ENCODE measurements at regions of chr22 and their contacts with region 1.

Region 1: DNA sequence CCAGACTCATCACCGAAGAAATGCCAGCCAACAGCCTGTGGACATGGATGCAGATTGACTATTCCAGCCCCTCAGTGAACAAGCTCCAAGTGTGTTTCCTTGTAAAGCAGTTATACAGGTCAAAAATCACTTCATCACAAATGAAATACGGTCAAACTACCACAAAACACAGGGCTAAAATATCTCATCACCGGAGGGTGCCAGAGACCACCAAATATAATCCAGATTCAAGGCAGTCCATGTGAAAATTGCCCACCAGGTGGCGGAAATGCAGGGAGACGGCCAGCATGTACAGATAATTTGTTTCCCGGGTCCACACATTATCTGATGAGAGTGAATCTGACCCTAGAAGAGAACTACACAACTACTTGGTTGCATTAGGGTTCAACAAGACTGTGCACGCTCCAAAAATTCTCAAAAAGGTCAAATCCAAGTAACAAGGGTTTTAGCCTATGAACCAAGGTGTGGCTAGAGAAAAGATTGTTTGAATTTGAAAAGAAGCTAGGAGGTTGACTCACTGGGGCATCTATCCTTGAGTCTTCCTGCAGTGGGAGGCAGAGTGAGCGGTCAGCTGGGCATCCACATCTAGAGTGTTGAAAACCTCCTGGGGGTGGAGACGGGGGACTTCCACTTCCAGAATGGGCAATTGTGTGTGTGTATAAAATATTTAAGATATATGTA is 71.7 kb downstream of the IGLL5 start:
- DNase-seq: no peak
- ATAC-seq: peak; percentile 63
- H3K4me3 Mint-ChIP-seq: no peak overlapping the region
- H3K27ac Mint-ChIP-seq: no peak overlapping the region
- H3K4me1 Mint-ChIP-seq: peaks cover 15% of the 10 kb centered on the region
- H3K27me3 Mint-ChIP-seq: no peaks in the 10 kb centered on the region
- CTCF ChIP-seq: peak; percentile 94

Region 2: DNA sequence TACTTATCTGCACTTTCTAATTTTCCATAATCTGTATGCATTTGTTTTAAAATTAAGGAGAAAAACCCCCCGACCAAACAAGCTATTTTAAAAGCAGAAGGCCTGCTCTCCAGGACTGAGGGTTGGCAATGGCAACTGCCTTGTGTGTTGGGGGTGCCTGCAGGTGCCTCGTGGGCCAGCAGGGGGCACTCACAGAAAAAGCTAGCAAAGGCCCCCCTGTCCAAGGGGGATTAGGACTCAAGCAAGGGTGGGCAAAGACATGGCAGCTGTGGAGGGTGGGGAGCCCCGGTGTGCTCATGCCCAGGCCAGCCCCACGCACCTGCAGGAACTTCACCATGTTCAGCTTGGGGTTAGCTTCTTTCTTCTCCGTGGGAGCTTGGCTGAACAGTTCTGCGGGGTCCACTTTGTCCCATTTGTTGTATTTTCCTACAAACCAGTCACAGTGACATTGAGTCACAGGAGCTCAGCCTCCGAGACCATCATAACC is 987.0 kb before region 1 on chr22:
- CTCF ChIA-PET with region 1: interaction called, 7 read pairs
- POLR2A ChIA-PET with region 1: no interaction called
- intact Hi-C with region 1: loop called (anchors 10 kb)
- DNase-seq: peak; percentile 56
- ATAC-seq: peak; percentile 77
- H3K4me3 Mint-ChIP-seq: no peak overlapping the region
- H3K27ac Mint-ChIP-seq: no peak overlapping the region
- H3K4me1 Mint-ChIP-seq: peaks cover 2% of the 10 kb centered on the region
- H3K27me3 Mint-ChIP-seq: no peaks in the 10 kb centered on the region
- CTCF ChIP-seq: peak; percentile 79

Region 3: GRCh38 chr22:22357024-22357883 is 602.0 kb before region 1 on chr22:
- CTCF ChIA-PET with region 1: interaction called, 12 read pairs
- POLR2A ChIA-PET with region 1: interaction called, 3 read pairs
- intact Hi-C with region 1: loop called (anchors 1 kb)
- DNase-seq: peak; percentile 74
- ATAC-seq: peak; percentile 87
- H3K4me3 Mint-ChIP-seq: peak overlapping the region; percentile 65
- H3K27ac Mint-ChIP-seq: peak overlapping the region; percentile 79
- H3K4me1 Mint-ChIP-seq: peaks cover 55% of the 10 kb centered on the region
- H3K27me3 Mint-ChIP-seq: no peaks in the 10 kb centered on the region
- CTCF ChIP-seq: no peak

Region 4: GRCh38 chr22:22687638-22688500 is 271.4 kb before region 1 on chr22:
- CTCF ChIA-PET with region 1: interaction called, 25 read pairs
- POLR2A ChIA-PET with region 1: interaction called, 3 read pairs
- intact Hi-C with region 1: no loop called
- DNase-seq: no peak
- ATAC-seq: no peak
- H3K4me3 Mint-ChIP-seq: peak overlapping the region; percentile 30
- H3K27ac Mint-ChIP-seq: no peak overlapping the region
- H3K4me1 Mint-ChIP-seq: peaks cover 55% of the 10 kb centered on the region
- H3K27me3 Mint-ChIP-seq: no peaks in the 10 kb centered on the region
- CTCF ChIP-seq: peak; percentile 22

Region 5: GRCh38 chr22:22770280-22770871 is 188.9 kb before region 1 on chr22:
- CTCF ChIA-PET with region 1: interaction called, 34 read pairs
- POLR2A ChIA-PET with region 1: no interaction called
- intact Hi-C with region 1: no loop called
- DNase-seq: no peak
- ATAC-seq: peak; percentile 40
- H3K4me3 Mint-ChIP-seq: no peak overlapping the region
- H3K27ac Mint-ChIP-seq: no peak overlapping the region
- H3K4me1 Mint-ChIP-seq: peaks cover 28% of the 10 kb centered on the region
- H3K27me3 Mint-ChIP-seq: peaks cover 17% of the 10 kb centered on the region
- CTCF ChIP-seq: peak; percentile 20

Region 6: DNA sequence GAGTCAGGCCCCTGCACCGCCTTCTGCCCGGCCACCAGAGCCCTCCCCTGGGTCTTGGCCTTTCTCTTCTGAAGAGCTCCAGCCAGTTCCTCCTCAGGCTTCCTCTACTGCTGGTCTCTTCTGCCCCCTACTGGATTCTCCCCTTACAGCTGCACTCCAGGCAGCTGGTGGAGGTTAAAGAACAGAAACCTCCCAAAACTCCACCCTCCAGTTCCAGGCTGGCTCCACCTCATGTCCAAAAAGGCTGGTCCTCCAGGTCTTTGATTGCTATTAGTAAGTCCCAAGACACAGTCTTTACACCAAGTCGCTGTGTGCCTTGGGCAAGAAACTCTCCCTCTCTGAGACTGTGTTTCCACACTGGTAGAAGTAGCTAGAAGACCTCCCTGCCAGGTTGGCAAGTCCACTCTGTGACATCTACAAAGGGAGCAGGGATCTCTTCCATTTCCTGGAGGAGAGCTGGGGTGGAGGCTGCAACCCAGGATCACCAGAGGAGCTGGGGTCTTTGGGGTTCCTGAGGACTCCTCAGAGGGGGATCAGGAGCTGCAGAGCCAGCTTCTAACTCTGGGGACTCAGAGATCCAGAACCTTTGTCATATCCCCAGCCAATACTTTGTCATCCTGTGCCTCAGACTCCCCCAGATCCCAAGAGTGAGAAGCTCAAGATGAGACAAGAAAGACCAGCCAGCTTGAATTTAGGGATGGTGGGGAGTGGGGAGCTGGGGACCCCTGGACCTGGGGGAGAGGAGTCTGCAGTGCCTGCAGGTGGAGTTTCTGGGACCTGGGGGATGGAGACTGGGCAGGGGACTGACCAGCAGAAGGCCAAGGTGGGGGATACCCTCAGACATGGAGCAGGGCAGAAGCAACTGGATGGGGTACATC is 75.0 kb before region 1 on chr22:
- CTCF ChIA-PET with region 1: interaction called, 130 read pairs
- POLR2A ChIA-PET with region 1: interaction called, 23 read pairs
- intact Hi-C with region 1: loop called (anchors 1 kb)
- DNase-seq: no peak
- ATAC-seq: peak; percentile 52
- H3K4me3 Mint-ChIP-seq: peak overlapping the region; percentile 28
- H3K27ac Mint-ChIP-seq: peak overlapping the region; percentile 83
- H3K4me1 Mint-ChIP-seq: peaks cover 88% of the 10 kb centered on the region
- H3K27me3 Mint-ChIP-seq: peaks cover 5% of the 10 kb centered on the region
- CTCF ChIP-seq: peak; percentile 75

Region 7: DNA sequence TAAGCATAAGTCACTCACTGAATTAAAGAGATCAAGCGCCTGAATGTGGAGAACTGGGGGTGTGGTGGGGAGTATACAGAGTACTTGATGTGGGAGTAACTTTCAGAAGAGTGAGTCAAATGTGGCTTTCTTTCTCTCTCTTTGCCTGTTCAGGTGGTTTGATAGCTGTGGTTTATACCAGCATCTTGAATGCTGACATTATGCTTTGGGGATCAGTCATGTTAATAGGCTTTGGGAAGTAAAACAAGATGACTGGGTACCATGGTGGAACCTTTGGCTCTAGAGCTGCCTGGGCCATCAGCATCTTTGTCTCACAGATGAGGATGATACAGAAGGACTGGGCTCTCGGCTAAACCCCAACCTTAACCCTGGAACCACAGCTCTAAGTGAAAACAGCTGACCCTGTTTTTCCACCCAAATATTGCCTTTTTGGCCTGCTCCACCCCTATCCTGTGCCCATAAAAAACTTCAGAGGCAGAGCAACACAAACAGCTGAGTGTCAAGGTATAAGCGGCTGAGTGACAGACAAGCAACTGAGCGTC is 52.9 kb after region 1 on chr22:
- CTCF ChIA-PET with region 1: no interaction called
- POLR2A ChIA-PET with region 1: no interaction called
- intact Hi-C with region 1: no loop called
- DNase-seq: no peak
- ATAC-seq: no peak
- H3K4me3 Mint-ChIP-seq: no peak overlapping the region
- H3K27ac Mint-ChIP-seq: no peak overlapping the region
- H3K4me1 Mint-ChIP-seq: no peaks in the 10 kb centered on the region
- H3K27me3 Mint-ChIP-seq: no peaks in the 10 kb centered on the region
- CTCF ChIP-seq: no peak

Region 8: DNA sequence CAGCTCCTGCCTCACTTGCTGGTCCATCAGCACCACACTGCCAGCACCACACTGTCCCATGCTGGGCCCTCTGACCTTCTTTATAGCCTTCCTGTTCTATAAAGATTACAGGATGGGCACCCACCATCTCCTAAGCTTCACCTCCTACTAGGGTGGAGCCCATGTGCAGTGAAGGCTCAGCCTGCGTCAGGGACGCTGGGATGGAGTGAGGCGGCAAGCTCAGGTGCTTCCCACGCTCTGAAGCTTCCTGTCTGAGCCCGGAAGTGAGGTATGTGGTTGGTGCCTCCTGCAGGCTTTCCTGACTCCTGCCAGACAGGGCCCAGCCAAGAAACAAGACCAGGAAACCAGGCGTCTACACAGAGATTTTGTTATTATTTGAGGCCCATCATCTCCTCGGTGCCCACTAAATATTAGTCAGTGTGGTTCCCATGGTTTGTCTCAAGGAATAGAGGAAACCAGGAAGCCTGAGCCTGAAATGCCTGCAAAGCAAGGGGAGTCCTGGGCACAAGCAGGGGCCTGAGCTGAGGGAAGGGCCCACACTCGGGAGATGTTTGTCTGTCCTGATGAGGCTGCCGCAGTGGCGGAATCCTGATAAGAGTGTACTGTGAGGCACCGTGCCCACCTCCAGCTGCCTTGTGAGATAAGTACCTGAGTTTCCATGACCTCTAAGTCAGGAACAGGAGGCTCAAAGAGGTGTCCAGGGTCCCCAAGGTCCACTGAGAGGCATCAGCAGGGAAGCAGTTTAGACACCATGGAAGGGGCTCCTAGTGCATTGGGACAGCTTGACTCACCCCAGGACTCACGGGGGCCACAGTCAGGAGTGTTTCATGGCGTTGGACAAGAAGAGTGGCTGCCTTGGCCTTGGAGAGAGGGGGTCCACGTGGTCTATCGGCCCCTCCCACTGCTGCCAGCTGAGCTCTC is 160.5 kb after region 1 on chr22:
- CTCF ChIA-PET with region 1: interaction called, 19 read pairs
- POLR2A ChIA-PET with region 1: interaction called, 3 read pairs
- intact Hi-C with region 1: no loop called
- DNase-seq: no peak
- ATAC-seq: peak; percentile 42
- H3K4me3 Mint-ChIP-seq: no peak overlapping the region
- H3K27ac Mint-ChIP-seq: peak overlapping the region; percentile 53
- H3K4me1 Mint-ChIP-seq: peaks cover 9% of the 10 kb centered on the region
- H3K27me3 Mint-ChIP-seq: no peaks in the 10 kb centered on the region
- CTCF ChIP-seq: no peak

Region 9: DNA sequence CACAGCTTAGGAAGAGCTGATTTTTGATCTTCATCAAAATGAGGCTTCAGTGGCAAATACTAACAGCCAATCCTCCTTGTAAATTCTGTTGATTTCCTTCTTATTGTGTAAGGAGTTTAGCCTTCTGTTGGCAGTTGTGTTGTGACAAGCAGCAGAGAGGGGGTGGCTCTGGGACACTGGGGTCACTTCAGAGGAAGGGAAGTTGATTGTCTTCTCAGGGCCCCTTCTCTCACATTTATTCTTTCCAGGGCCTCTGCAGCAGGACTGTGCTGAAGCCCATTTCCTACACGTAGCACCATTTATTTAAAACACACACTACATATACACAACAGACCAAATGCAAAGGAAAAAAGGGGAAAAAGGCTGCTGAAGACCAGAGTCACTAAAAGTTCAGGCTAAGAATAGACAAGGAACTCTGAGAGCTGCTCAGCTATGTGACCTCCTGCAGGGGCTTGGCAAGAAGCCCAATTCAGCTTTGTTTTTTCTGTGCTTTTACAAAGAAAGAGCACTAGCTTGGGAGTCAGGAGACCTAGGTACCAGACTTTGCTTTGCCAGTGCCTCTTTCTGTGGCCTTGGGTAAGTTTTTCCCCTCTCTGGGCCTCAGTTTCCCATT is 1507.5 kb after region 1 on chr22:
- CTCF ChIA-PET with region 1: no interaction called
- POLR2A ChIA-PET with region 1: no interaction called
- intact Hi-C with region 1: no loop called
- DNase-seq: no peak
- ATAC-seq: no peak
- H3K4me3 Mint-ChIP-seq: no peak overlapping the region
- H3K27ac Mint-ChIP-seq: no peak overlapping the region
- H3K4me1 Mint-ChIP-seq: peaks cover 22% of the 10 kb centered on the region
- H3K27me3 Mint-ChIP-seq: no peaks in the 10 kb centered on the region
- CTCF ChIP-seq: no peak